Heart left ventricle (tissue), 16 donors: ENCODE measurements at regions of chr9 and their contacts with region 1.

Region 1: DNA sequence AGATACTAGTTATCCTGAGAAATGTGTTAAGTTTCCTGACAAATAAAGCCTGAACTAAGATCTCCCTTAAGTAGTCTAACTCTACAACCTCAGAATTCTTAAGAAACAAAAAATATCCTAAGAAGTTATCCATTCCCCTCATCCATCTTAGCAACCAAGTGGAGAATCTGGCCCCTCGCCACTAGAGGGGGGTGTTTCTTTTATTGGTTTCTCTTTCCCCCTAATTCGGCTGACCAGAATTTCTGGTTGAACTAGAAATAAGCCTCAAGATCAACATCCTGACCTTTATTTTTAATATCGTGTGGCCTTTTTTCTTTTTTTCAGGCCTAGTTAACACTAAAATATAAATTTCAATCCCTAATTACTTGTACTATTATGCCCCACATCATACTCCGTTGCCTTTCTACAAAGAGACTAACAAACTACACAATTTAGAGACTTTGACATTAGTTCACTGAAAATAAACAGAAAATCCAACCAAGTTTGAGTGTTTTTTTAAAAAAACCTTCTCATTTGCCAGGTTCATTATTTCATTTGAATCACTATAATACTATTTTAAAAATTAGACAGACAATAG is 14.3 kb upstream of the NR4A3 start:
- DNase-seq: peak; percentile 56 to 70 (median 61)
- ATAC-seq: peak in 2 of 4 donors; percentile 59 to 65
- H3K4me3 ChIP-seq: no peak overlapping the region
- H3K27ac ChIP-seq: no peak overlapping the region
- H3K4me1 ChIP-seq: peaks cover 0 to 11% (median 1%) of the 10 kb centered on the region in 12 donors
- H3K27me3 ChIP-seq: no peaks in the 10 kb centered on the region
- CTCF ChIP-seq: peak; percentile 70 to 91 (median 80)
- POLR2A ChIP-seq: no peak

Region 2: GRCh38 chr9:99184475-99185347 is 622.7 kb before region 1 on chr9:
- intact Hi-C with region 1: loop called in 1 of 10 experiments (anchors 5 kb)
- DNase-seq: peak; percentile 82 to 89 (median 86)
- ATAC-seq: peak; percentile 82 to 94 (median 90)
- H3K4me3 ChIP-seq: peak overlapping the region in 9 of 12 donors; percentile 14 to 46 (median 37)
- H3K27ac ChIP-seq: peak overlapping the region in 7 of 12 donors; percentile 10 to 51 (median 32)
- H3K4me1 ChIP-seq: peaks cover 0 to 19% (median 6%) of the 10 kb centered on the region in 12 donors
- H3K27me3 ChIP-seq: peaks cover 0 to 4% (median 0%) of the 10 kb centered on the region in 9 donors
- CTCF ChIP-seq: peak; percentile 89 to 98 (median 93)
- POLR2A ChIP-seq: no peak

Region 3: DNA sequence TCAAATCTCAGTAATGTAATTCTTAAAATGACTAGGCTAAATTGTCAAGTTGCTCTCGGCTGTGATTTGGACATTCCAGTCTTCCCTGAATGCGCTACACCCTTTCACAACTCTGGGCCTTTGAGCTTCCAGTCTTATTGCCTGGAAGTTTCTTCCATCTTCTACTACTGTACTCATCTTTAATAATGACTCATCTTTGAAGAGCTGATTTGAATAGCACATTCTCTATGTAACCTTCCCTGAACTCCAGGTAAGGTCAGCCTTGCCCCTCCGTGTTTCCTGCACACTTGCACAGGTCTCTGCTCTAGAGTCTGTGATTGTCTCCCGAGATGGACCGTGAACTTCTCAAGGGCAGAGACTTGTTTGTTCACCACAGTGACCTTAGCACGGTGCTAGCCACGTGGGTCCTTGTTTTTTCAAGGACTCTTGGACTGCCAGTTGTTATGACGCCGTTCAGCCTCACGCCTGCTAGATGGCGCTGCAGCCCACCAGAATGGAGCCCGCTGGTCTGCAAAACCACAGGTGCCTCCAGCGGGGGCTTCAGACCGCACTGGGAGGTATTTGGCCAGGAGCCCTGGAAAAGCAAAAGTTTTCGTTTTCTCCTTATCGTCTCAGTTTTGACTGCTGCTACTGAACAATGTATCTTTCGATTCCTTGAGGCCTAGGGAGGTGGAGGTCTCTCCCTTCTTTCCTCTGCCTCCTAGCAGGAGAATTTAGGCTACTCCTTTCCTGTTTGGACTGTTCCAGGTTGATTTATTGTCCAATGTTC is 540.9 kb before region 1 on chr9:
- intact Hi-C with region 1: loop called in 1 of 10 experiments (anchors 2 kb)
- DNase-seq: peak; percentile 63 to 79 (median 66)
- ATAC-seq: peak; percentile 55 to 88 (median 82)
- H3K4me3 ChIP-seq: no peak overlapping the region
- H3K27ac ChIP-seq: no peak overlapping the region
- H3K4me1 ChIP-seq: peaks cover 0 to 10% (median 2%) of the 10 kb centered on the region in 12 donors
- H3K27me3 ChIP-seq: no peaks in the 10 kb centered on the region
- CTCF ChIP-seq: peak; percentile 65 to 90 (median 78)
- POLR2A ChIP-seq: no peak

Region 4: GRCh38 chr9:99906403-99907207 is 99.2 kb after region 1 on chr9 and contains the start of gene STX17:
- intact Hi-C with region 1: loop called in 1 of 10 experiments (anchors 5 kb)
- DNase-seq: peak; percentile 80 to 90 (median 83)
- ATAC-seq: peak; percentile 79 to 98 (median 97)
- H3K4me3 ChIP-seq: peak within 1 kb of the TSS; percentile 62 to 100 (median 92)
- H3K27ac ChIP-seq: peak within 1 kb of the TSS; percentile 90 to 99 (median 96)
- H3K4me1 ChIP-seq: peaks cover 0 to 27% (median 13%) of the 10 kb centered on the region in 12 donors
- H3K27me3 ChIP-seq: no peaks in the 10 kb centered on the region
- CTCF ChIP-seq: peak in 2 of 12 donors; percentile 7 to 21
- POLR2A ChIP-seq: peak; percentile 34 to 77
- total RNA-seq, gene STX17: 15.4 to 29.1 (median 23.7) TPM

Region 5: GRCh38 chr9:99999797-100000196 is 192.4 kb after region 1 on chr9:
- intact Hi-C with region 1: loop called in 1 of 10 experiments (anchors 10 kb)
- DNase-seq: no peak
- ATAC-seq: no peak
- H3K4me3 ChIP-seq: no peak overlapping the region
- H3K27ac ChIP-seq: no peak overlapping the region
- H3K4me1 ChIP-seq: no peaks in the 10 kb centered on the region
- H3K27me3 ChIP-seq: no peaks in the 10 kb centered on the region
- CTCF ChIP-seq: no peak
- POLR2A ChIP-seq: no peak

Region 6: DNA sequence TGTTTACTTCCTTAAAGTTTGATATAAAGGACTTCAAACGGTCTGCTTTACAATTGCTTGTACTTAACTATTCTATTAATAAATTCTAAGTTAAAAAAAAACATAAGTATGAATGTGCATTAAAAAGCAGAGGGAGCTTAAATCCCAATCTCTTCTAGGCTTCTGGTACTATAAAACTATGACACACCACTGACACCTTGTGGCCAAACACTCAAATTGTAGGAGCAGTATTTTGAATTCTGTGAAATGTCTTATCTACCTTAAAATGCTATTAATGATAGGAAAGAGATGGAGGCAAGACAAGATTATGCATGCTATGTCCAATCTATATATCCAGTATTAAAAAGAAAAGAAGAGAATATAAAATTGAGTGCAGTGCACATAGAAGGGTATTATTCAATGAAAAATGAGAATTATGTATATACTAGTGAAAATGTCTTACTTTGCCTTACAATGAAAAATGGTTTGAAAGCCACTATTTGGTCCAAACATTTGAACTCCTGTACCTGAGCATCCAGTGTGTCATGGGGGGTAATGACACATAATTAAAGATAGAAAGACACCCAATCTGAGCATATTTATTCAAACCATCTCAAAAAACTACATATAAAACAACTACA is 203.8 kb after region 1 on chr9:
- intact Hi-C with region 1: loop called in 2 of 10 experiments (anchors 5 to 10 kb)
- DNase-seq: no peak
- ATAC-seq: no peak
- H3K4me3 ChIP-seq: no peak overlapping the region
- H3K27ac ChIP-seq: no peak overlapping the region
- H3K4me1 ChIP-seq: no peaks in the 10 kb centered on the region
- H3K27me3 ChIP-seq: no peaks in the 10 kb centered on the region
- CTCF ChIP-seq: peak; percentile 19 to 62 (median 48)
- POLR2A ChIP-seq: no peak

Region 7: DNA sequence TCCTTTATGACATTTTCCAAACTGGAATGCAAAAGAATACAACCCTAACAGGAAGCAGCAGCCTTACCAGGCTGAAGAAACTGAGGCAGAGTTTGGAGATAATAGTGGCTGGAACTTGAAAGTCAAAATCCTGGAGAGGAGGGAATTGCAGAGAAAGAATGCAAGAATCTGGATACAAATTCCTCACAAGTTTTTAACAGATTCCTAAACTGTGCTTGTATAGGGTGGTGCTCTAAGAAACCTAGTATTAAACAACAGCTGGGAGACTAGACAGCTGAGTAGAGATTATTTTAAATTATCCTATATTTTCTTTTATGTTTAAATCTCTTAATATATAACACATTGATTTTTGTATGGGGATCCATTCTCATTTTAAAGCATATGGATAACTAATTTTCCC is 322.4 kb after region 1 on chr9:
- intact Hi-C with region 1: no loop called
- DNase-seq: no peak
- ATAC-seq: no peak
- H3K4me3 ChIP-seq: no peak overlapping the region
- H3K27ac ChIP-seq: no peak overlapping the region
- H3K4me1 ChIP-seq: peaks cover 0 to 5% (median 0%) of the 10 kb centered on the region in 12 donors
- H3K27me3 ChIP-seq: no peaks in the 10 kb centered on the region
- CTCF ChIP-seq: no peak
- POLR2A ChIP-seq: no peak

Region 8: GRCh38 chr9:100322954-100323536 is 515.7 kb after region 1 on chr9:
- intact Hi-C with region 1: loop called in 1 of 10 experiments (anchors 5 kb)
- DNase-seq: no peak
- ATAC-seq: no peak
- H3K4me3 ChIP-seq: no peak overlapping the region
- H3K27ac ChIP-seq: no peak overlapping the region
- H3K4me1 ChIP-seq: peaks cover 0 to 6% (median 0%) of the 10 kb centered on the region in 12 donors
- H3K27me3 ChIP-seq: no peaks in the 10 kb centered on the region
- CTCF ChIP-seq: peak; percentile 46 to 75 (median 62)
- POLR2A ChIP-seq: no peak